ENCODE measurements at regions of chr15 and their contacts with region 1.

Region 1: DNA sequence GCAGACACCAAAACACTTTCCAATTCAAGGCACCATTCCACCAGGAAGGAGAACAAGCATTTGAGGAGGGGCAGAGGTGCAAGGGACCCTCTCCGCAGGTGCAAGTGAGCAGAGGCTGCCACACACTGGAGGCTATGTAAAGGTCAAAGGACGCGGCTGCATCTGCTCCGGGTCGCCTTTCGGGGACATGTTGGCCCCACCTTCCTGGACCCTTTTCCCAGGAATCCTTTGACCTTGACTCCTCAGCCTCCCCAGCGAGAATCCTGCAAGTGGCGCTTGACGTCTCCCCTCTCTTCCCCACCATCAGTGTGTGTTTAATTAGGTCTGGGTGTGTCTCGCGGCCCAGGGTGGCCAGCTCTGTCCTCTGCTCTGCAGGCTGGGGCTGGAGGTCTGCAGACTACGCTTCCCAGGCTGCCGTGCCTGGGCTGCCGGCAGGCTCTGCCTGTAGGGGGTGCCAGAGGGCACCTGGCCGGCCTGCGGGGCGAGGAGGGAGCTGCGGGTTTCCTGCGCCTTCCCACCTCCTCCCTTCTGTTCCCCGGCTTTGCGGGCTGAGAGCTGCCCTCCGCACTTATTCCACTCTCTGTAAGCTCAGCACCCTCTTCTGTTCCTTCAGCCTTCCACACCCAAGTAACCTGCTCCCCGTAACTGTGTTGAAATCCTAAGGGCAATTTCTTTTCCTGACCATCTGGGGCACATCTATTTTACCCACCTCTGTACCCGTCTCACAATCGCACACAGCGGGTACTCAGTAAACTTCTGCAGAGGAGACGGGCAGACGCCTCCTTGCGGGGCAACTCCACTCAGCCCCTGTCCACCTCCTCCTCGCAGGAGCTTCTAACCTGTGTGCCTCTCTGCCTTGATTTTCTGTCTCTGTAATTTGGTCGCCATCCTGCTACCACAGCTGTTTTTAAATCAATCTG is 129.8 kb downstream of the NSMCE3 start:
- ATAC-seq: peak; percentile 66 to 96 (median 92)
- H3K4me3 ChIP-seq: no peak overlapping the region
- H3K27ac ChIP-seq: peak overlapping the region in 1 of 2 donors; percentile 18
- H3K4me1 ChIP-seq: peaks cover 21 to 42% of the 10 kb centered on the region in 2 donors

Region 2: DNA sequence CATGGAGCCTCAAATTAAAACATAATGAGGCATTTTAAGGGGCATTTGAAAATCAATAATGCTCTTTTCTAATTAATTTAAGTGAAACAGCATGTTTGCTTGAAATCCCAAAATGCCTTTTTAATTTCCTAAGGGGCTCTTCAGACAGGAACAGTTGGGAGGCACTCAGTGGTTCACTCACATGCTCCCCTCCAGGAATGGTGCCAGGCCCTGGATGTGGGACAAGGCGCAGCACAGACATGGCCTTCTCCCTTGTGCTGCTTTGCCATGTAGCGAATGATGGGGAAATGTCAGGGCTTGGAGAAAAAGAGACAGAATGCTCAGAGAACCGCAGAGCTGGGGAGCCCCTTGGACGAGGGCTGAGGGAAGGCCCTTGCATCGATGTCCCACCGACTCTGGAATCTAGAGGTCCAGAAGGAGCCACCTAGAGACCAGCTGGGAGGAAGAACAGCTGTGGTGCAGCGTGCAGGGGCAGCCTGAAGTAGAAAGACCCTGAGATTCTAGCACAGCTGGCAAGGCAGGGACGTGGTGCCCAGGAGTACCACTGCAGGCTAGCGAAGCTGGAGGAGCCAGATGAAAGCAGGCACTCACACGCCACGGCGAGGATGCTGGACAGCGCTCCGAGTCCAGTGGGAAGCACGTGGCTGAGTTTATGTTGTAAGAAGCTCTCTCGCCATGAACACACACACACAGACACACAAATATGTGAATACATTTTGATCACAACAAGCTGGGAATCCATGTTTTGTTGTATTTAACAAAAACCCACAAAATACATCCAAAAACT is 102.8 kb after region 1 on chr15:
- in situ Hi-C with region 1: loop called in 1 of 9 experiments (anchors 25 kb)
- ATAC-seq: peak in 2 of 8 experiments; percentile 23 to 49
- H3K4me3 ChIP-seq: no peak overlapping the region
- H3K27ac ChIP-seq: no peak overlapping the region
- H3K4me1 ChIP-seq: peaks cover 11 to 30% of the 10 kb centered on the region in 2 donors

Region 3: GRCh38 chr15:29269485-29270168 is 129.8 kb after region 1 on chr15 and contains the start of gene NSMCE3:
- in situ Hi-C with region 1: loop called in 3 of 9 experiments (anchors 25 kb)
- ATAC-seq: peak; percentile 66 to 97 (median 96)
- H3K4me3 ChIP-seq: peak within 1 kb of the TSS; percentile 67 to 99 (median 97)
- H3K27ac ChIP-seq: peak within 1 kb of the TSS; percentile 94 to 95
- H3K4me1 ChIP-seq: peaks cover 6 to 22% of the 10 kb centered on the region in 2 donors
- total RNA-seq, gene NSMCE3: 11.0 to 95.5 (median 13.7) TPM

Region 4: DNA sequence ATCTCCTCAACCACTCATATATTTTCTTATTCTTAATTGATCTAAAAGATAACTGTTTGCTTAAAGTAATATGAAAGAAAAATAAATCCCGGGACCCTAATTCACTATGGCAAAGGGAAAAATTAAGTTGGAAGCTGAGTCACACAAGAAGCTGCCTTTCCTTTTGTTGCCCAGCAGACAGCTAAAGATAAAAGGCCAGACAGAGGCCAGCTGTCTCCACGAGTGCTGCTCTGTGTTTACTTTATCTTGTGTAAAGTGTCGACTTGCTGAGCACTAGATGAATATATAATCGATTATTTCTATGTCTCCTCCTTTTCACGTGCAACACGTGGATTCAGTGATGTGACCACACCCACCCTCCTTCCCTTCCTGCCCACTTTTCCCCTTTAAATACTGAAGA is 182.6 kb after region 1 on chr15:
- in situ Hi-C with region 1: no loop called
- ATAC-seq: peak in 5 of 8 experiments; percentile 61 to 94 (median 71)
- H3K4me3 ChIP-seq: no peak overlapping the region
- H3K27ac ChIP-seq: no peak overlapping the region
- H3K4me1 ChIP-seq: peaks cover 4 to 10% of the 10 kb centered on the region in 2 donors

Region 5: GRCh38 chr15:29568838-29569532 is 429.2 kb after region 1 on chr15:
- in situ Hi-C with region 1: loop called in 1 of 9 experiments (anchors 25 kb)
- ATAC-seq: peak in 4 of 8 experiments; percentile 28 to 57 (median 30)
- H3K4me3 ChIP-seq: peak overlapping the region; percentile 52 to 82 (median 55)
- H3K27ac ChIP-seq: no peak overlapping the region
- H3K4me1 ChIP-seq: peaks cover 8 to 13% of the 10 kb centered on the region in 2 donors

Measured in motor neuron (in vitro differentiated cells).